Activated B cell treated with CpG ODN at 0.5 μM for 24 hours (primary cell): ENCODE measurements at regions of chrX and their contacts with region 1.

Region 1: DNA sequence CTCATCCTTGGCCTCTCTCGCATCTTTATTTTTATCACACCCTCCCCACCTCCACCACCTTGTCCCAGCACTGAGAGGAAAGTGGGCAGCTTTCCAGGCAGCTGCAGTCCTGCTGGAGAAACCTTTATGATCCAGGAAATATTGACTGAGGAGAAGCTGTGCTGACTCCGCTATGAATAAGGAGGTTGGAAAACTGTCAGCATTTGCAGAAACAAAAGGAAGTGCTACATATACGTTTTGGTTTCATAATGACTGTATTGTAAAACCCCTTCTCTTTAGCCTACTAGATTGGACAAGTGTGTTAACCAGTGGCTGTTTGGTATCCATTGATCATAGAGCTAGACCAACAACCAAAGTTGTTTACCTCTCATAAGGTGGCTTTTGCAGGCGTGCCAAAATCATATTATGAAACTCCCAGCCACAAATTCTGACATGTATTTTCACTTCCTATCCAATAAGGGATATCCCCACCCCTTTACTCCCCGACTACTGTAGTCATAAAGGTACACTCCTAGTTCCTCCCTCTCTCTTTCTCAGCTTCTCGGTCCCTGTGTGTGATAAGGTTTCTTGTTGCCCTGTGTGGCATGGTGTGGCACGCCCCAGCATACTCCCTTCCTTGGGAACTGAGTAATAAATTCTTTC is 88.4 kb downstream of the GPR143 start:
- DNase-seq: no peak
- ATAC-seq: peak; percentile 89
- H3K4me3 Mint-ChIP-seq: peak overlapping the region; percentile 58
- H3K27ac Mint-ChIP-seq: peak overlapping the region; percentile 89
- H3K4me1 Mint-ChIP-seq: peaks cover 50% of the 10 kb centered on the region
- H3K27me3 Mint-ChIP-seq: no peaks in the 10 kb centered on the region
- CTCF ChIP-seq: no peak

Region 2: DNA sequence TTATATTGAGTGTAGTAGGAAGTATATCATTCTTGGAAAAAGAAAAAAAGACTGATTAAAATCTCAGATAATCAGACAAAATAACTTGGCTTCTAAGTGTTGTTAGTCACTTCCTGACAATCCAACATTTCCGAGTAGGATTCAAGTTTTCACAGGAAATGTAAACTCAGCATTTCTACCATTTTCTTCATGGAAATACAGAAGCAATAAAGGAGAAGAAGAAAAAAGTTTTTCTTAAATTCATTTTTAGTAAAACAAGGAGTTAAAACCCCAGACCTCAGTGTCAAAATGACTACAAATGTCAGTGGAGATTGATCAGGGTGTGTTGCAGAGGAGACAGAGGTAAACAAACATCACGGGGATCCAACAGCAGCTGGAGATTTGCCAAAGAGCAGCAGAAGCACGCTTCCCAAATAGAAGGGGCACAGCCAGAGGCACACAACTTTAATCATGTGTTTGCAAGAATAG is 514.0 kb before region 1 on chrX:
- CTCF ChIA-PET with region 1: no interaction called
- POLR2A ChIA-PET with region 1: no interaction called
- intact Hi-C with region 1: loop called (anchors 10 kb)
- DNase-seq: no peak
- ATAC-seq: no peak
- H3K4me3 Mint-ChIP-seq: no peak overlapping the region
- H3K27ac Mint-ChIP-seq: no peak overlapping the region
- H3K4me1 Mint-ChIP-seq: peaks cover 28% of the 10 kb centered on the region
- H3K27me3 Mint-ChIP-seq: peaks cover 8% of the 10 kb centered on the region
- CTCF ChIP-seq: no peak

Region 3: DNA sequence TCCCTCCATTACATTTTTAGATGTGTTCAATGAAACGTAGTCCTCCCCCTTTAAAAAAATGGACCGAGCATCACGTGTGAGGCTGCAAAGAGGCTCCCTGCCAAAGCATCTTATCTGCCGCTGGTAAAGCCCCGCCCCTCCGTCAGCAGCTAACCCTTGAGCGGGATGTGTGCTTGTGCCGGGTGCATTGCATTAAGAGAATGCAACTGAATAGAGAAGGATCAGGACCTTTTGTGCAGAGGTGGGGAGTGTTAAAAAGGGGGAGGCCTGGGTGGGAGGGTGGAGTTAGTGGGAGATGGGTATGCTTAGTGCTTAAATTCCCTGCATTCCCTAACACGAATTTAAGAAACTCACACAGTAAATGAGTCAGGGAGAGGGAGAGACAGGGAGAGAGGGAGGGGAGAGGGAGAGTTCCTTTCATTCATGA is 146.4 kb before region 1 on chrX:
- CTCF ChIA-PET with region 1: no interaction called
- POLR2A ChIA-PET with region 1: no interaction called
- intact Hi-C with region 1: loop called (anchors 5 kb)
- DNase-seq: peak; percentile 28
- ATAC-seq: peak; percentile 88
- H3K4me3 Mint-ChIP-seq: peak overlapping the region; percentile 79
- H3K27ac Mint-ChIP-seq: peak overlapping the region; percentile 80
- H3K4me1 Mint-ChIP-seq: peaks cover 73% of the 10 kb centered on the region
- H3K27me3 Mint-ChIP-seq: no peaks in the 10 kb centered on the region
- CTCF ChIP-seq: no peak

Region 4: DNA sequence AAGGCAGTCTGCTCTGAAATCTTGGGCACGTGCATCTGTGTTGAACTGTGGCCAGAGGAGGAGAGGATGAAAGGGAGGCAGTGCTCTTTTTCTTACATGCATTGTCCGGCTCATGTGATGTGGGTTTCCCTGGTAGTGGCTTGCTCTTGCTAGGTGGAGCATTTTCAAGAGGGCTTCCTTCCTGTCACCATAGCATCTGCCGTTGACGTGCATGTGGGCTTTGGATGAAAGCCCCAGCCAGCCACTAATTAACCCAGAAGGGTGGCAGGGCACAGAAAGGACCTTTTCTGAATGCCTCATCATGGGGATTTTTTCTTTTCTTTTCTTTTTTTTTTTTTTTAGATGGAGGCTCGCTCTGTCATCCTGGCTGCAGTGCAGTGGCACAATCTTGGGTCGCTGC is 32.9 kb before region 1 on chrX:
- CTCF ChIA-PET with region 1: no interaction called
- POLR2A ChIA-PET with region 1: no interaction called
- intact Hi-C with region 1: loop called (anchors 2 kb)
- DNase-seq: peak; percentile 16
- ATAC-seq: peak; percentile 94
- H3K4me3 Mint-ChIP-seq: peak overlapping the region; percentile 38
- H3K27ac Mint-ChIP-seq: peak overlapping the region; percentile 60
- H3K4me1 Mint-ChIP-seq: peaks cover 28% of the 10 kb centered on the region
- H3K27me3 Mint-ChIP-seq: no peaks in the 10 kb centered on the region
- CTCF ChIP-seq: no peak

Region 5: DNA sequence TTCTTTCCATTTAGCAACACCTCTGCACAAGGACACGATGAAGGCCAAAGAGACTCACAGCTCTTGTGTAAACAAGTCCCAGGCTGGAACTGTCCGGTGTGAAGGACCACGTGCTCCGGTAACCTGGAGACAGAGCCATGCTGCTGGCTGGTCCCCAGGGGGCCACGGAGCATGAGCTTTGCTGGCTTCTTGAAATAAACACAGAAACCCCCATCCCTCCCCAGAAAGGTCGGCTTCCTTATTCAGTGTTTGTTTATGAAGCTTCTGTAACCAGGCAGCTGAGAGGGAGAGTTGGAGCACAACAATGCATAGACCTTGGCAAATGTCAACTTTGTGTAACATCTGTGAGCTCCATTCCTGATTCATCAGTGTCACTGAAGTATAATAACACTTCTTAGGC is 20.9 kb before region 1 on chrX:
- CTCF ChIA-PET with region 1: no interaction called
- POLR2A ChIA-PET with region 1: interaction called, 7 read pairs
- intact Hi-C with region 1: loop called (anchors 2 kb)
- DNase-seq: no peak
- ATAC-seq: peak; percentile 86
- H3K4me3 Mint-ChIP-seq: no peak overlapping the region
- H3K27ac Mint-ChIP-seq: peak overlapping the region; percentile 76
- H3K4me1 Mint-ChIP-seq: peaks cover 21% of the 10 kb centered on the region
- H3K27me3 Mint-ChIP-seq: no peaks in the 10 kb centered on the region
- CTCF ChIP-seq: no peak

Region 6: DNA sequence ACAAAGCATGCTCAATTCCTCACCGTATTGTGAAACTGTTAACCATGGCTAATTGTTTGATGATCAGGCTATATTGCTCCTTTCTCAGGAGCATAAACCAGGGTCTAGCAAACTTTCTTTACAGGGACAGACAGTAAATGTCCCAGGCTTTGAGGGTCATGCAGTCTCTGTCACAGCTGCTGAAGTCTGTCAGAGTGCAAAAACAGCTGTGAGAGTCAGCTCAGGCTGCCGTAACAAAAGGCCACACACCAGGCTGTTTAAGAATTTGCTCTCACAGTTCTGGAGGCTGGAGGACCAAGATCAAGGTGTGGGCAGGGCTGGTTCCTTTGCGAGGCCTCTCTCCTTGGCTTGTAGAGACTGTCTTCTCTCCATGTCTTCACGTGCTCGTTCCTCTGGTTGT is 12.8 kb after region 1 on chrX:
- CTCF ChIA-PET with region 1: no interaction called
- POLR2A ChIA-PET with region 1: no interaction called
- intact Hi-C with region 1: no loop called
- DNase-seq: no peak
- ATAC-seq: no peak
- H3K4me3 Mint-ChIP-seq: no peak overlapping the region
- H3K27ac Mint-ChIP-seq: no peak overlapping the region
- H3K4me1 Mint-ChIP-seq: no peaks in the 10 kb centered on the region
- H3K27me3 Mint-ChIP-seq: no peaks in the 10 kb centered on the region
- CTCF ChIP-seq: no peak

Region 7: GRCh38 chrX:10199212-10199611 is 522.0 kb after region 1 on chrX:
- CTCF ChIA-PET with region 1: no interaction called
- POLR2A ChIA-PET with region 1: no interaction called
- intact Hi-C with region 1: loop called (anchors 1 kb)
- DNase-seq: no peak
- ATAC-seq: peak; percentile 92
- H3K4me3 Mint-ChIP-seq: peak overlapping the region; percentile 55
- H3K27ac Mint-ChIP-seq: peak overlapping the region; percentile 86
- H3K4me1 Mint-ChIP-seq: peaks cover 30% of the 10 kb centered on the region
- H3K27me3 Mint-ChIP-seq: no peaks in the 10 kb centered on the region
- CTCF ChIP-seq: no peak